Spleen (tissue), 13 donors: ENCODE measurements at regions of chr21 and their contacts with region 1.

Region 1: GRCh38 chr21:21921421-21922232 is 923.4 kb downstream of the NCAM2 start:
- DNase-seq: no peak
- H3K4me3 ChIP-seq: no peak overlapping the region
- H3K27ac ChIP-seq: no peak overlapping the region
- H3K4me1 ChIP-seq: no peaks in the 10 kb centered on the region
- H3K27me3 ChIP-seq: no peaks in the 10 kb centered on the region
- CTCF ChIP-seq: peak in 4 of 11 experiments; percentile 15 to 27 (median 23)
- POLR2A ChIP-seq: no peak

Region 2: DNA sequence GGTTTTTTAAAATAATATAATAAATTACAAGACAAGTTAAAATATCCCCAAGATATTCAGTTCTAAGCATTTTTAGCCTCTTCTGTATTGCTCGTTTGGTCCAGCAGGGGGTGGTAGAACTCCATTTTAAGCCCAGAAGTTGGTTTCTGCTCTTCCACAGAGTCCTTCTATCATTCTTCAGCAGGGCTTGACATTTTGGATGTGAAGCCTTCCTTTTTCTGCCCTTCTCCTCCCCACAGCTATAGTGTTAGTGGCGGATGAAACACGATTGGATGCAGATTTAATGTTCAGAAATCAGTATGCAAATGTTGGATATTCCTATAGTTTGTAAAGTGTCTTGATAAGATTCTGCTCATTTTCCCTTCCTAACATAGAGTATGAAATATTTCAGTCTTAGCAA is 922.0 kb before region 1 on chr21:
- intact Hi-C with region 1: loop called (anchors 10 kb)
- DNase-seq: no peak
- H3K4me3 ChIP-seq: no peak overlapping the region
- H3K27ac ChIP-seq: no peak overlapping the region
- H3K4me1 ChIP-seq: peaks cover 0 to 30% (median 17%) of the 10 kb centered on the region in 6 donors
- H3K27me3 ChIP-seq: peaks cover 0 to 41% (median 19%) of the 10 kb centered on the region in 7 donors
- CTCF ChIP-seq: peak; percentile 24 to 76 (median 57)
- POLR2A ChIP-seq: no peak

Region 3: DNA sequence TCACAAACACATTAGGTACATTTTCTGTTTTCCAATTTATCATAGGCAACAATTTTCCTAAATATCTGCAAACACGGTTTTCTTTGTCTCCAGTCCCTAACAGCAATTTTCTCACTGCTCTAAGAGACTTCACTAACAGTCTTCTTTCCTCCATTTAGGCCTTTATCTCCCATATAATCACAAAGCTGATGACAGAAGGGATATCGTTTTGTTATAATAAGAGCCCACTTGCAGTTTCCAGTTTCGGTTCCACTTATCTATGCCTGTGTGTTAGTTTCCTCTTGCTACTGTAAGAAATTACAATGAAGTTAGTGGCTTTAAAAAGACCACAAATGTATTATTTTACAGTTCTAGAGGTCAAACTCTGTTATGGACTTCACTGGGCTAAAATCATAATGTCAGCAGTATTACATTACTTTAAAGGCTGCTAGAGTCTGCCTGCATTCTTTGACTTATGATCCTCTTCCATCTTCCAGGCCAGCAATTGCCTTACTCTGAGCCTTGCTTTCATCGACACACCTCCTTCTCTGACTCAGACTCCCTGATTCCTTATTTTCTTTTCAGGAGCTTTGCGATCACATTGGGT is 374.2 kb before region 1 on chr21:
- intact Hi-C with region 1: no loop called
- DNase-seq: no peak
- H3K4me3 ChIP-seq: no peak overlapping the region
- H3K27ac ChIP-seq: no peak overlapping the region
- H3K4me1 ChIP-seq: no peaks in the 10 kb centered on the region
- H3K27me3 ChIP-seq: no peaks in the 10 kb centered on the region
- CTCF ChIP-seq: no peak
- POLR2A ChIP-seq: no peak